Adrenal gland (tissue), 19 donors: ENCODE measurements at regions of chr2 and their contacts with region 1.

Region 1: GRCh38 chr2:85712849-85713602 is 18.9 kb downstream of the GNLY start:
- DNase-seq: peak in 5 of 7 donors; percentile 31 to 66 (median 42)
- H3K4me3 ChIP-seq: no peak overlapping the region
- H3K27ac ChIP-seq: peak overlapping the region in 2 of 5 donors; percentile 61 to 90
- H3K4me1 ChIP-seq: peaks cover 15 to 42% of the 10 kb centered on the region in 2 donors
- H3K27me3 ChIP-seq: no peaks in the 10 kb centered on the region
- CTCF ChIP-seq: no peak
- POLR2A ChIP-seq: no peak

Region 2: DNA sequence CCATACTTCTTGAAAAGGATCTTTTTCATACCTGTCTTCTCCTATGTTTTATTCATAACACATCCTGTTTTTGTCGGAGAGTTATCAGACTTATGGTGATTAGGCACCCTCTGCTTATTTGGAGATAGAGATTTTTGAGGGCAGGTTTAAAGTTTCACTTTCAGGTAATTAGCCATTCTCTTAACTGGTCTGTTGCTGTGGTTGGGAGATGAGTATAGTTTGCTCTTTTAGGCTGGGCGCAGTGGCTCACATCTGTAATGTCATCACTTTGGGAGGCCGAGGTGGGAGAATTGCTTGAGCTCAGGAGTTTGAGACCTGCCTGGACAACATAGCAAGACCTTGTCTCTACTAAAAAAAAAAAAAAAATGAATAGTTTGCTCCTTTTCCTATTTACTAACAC is 70.3 kb before region 1 on chr2:
- intact Hi-C with region 1: loop called in 1 of 2 experiments (anchors 5 kb)
- DNase-seq: no peak
- H3K4me3 ChIP-seq: no peak overlapping the region
- H3K27ac ChIP-seq: no peak overlapping the region
- H3K4me1 ChIP-seq: no peaks in the 10 kb centered on the region
- H3K27me3 ChIP-seq: no peaks in the 10 kb centered on the region
- CTCF ChIP-seq: no peak
- POLR2A ChIP-seq: no peak

Region 3: DNA sequence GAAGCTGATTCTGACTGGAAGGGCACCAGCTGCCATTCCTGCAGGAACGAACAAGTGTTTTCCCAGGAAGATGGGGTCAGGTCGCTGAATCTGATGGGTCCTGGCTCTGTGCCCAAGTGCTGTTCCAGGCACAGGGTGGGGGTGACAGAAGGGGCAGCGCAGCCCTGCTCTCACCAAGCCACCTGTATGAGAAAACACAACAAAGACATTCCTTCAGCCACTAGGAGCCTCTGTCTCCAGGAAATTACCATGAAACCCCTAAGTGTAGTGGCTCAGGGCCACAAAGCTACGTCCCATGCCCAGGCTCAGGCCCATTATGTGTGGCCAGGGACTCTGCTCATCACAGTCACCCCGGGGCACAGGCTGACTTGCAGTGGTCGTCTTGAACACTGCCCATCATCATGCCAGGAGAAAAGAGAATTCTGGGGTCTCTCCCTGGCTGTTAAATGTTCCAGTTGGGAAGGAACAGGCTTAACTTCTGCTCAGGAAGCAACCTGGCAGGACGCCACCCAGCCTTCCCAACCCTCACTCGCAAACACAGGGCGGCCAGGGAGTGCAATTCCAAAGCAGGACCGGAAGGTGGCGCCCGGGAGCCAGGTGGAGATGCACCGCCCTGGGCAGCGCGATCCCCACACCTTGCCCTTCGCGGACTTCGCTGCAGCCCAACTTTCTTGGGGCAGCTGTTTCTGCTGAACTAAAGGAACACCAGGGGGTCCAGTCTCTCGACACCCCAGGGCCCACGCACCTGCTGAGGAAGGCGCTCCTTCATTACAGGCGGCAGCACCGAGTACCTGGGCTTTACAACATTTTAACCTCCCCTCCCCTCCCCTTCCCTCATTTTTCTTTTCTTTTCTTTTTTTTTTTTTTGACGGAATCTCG is 34.0 kb before region 1 on chr2:
- intact Hi-C with region 1: loop called in 1 of 2 experiments (anchors 5 kb)
- DNase-seq: peak; percentile 86 to 96 (median 93)
- H3K4me3 ChIP-seq: no peak overlapping the region
- H3K27ac ChIP-seq: peak overlapping the region in 1 of 5 donors; percentile 15
- H3K4me1 ChIP-seq: peaks cover 0 to 11% of the 10 kb centered on the region in 2 donors
- H3K27me3 ChIP-seq: no peaks in the 10 kb centered on the region
- CTCF ChIP-seq: peak; percentile 93 to 99 (median 97)
- POLR2A ChIP-seq: no peak